B cell (primary cell): ENCODE measurements at regions of chr12 and their contacts with region 1.

Region 1: DNA sequence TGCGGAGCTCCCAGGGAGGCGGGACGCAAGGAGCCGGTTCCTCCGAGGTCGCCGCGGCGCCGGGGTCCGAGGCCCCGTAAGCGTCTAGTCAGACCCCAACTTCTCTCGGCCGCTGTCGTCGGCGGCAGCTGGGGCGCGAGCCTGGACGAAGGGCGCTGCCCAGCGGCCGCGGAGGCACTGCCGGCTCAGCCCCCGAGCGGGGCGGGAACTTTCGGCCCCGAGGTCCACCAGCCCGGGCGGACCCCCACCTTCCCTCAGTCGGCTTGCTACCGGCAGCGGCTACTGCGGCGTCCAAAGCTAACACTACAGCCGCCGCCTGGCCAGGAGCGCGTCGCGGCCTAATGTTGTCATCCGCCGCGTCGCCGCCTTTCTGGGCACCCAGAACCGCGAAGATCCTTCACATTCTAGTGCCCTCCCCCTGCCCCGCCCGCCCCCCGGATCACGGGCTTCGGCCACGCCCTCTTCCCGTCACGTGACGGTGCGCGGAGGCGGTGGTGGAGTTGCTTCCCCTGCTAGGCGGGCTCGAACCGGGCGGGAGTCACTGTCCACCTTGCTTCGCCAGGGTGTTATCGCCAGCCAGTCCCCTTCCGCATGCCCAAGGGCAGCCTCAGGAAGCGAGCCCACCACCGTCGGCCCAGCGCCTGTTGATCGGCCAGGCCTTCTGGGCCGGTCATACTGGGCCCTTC is at the start of gene OSBPL8:
- DNase-seq: peak; percentile 95
- ATAC-seq: peak; percentile 79
- H3K4me3 ChIP-seq: peak within 1 kb of the TSS; percentile 76 to 99 (median 93)
- H3K4me3 Mint-ChIP-seq: peak within 1 kb of the TSS; percentile 98
- H3K27ac ChIP-seq: peak within 1 kb of the TSS; percentile 93 to 96
- H3K27ac Mint-ChIP-seq: peak within 1 kb of the TSS; percentile 98
- H3K4me1 ChIP-seq: peaks cover 29 to 46% of the 10 kb centered on the region in 2 donors
- H3K4me1 Mint-ChIP-seq: peaks cover 44% of the 10 kb centered on the region
- H3K27me3 ChIP-seq: no peaks in the 10 kb centered on the region
- H3K27me3 Mint-ChIP-seq: no peaks in the 10 kb centered on the region
- CTCF ChIP-seq: no peak
- total RNA-seq, gene OSBPL8: 112 and 116 TPM in 2 replicates

Region 2: GRCh38 chr12:75511116-75512048 is 1048.2 kb before region 1 on chr12 and contains the start of gene KRR1:
- CTCF ChIA-PET with region 1: no interaction called
- POLR2A ChIA-PET with region 1: no interaction called
- intact Hi-C with region 1: loop called (anchors 1 kb)
- DNase-seq: peak; percentile 95
- ATAC-seq: peak; percentile 97
- H3K4me3 ChIP-seq: peak within 1 kb of the TSS; percentile 61 to 100 (median 93)
- H3K4me3 Mint-ChIP-seq: peak within 1 kb of the TSS; percentile 93
- H3K27ac ChIP-seq: peak within 1 kb of the TSS; percentile 72 to 83
- H3K27ac Mint-ChIP-seq: peak within 1 kb of the TSS; percentile 95
- H3K4me1 ChIP-seq: peaks cover 11 to 18% of the 10 kb centered on the region in 2 donors
- H3K4me1 Mint-ChIP-seq: peaks cover 28% of the 10 kb centered on the region
- H3K27me3 ChIP-seq: no peaks in the 10 kb centered on the region
- H3K27me3 Mint-ChIP-seq: no peaks in the 10 kb centered on the region
- CTCF ChIP-seq: no peak
- total RNA-seq, gene KRR1: 80.2 and 87.7 TPM in 2 replicates

Region 3: GRCh38 chr12:76158518-76159321 is 400.8 kb before region 1 on chr12:
- CTCF ChIA-PET with region 1: no interaction called
- POLR2A ChIA-PET with region 1: no interaction called
- intact Hi-C with region 1: loop called (anchors 1 kb)
- DNase-seq: peak; percentile 82
- ATAC-seq: peak; percentile 99
- H3K4me3 ChIP-seq: peak overlapping the region; percentile 5 to 68 (median 45)
- H3K4me3 Mint-ChIP-seq: peak overlapping the region; percentile 91
- H3K27ac ChIP-seq: peak overlapping the region; percentile 14 to 76
- H3K27ac Mint-ChIP-seq: peak overlapping the region; percentile 94
- H3K4me1 ChIP-seq: peaks cover 9 to 16% of the 10 kb centered on the region in 2 donors
- H3K4me1 Mint-ChIP-seq: peaks cover 25% of the 10 kb centered on the region
- H3K27me3 ChIP-seq: no peaks in the 10 kb centered on the region
- H3K27me3 Mint-ChIP-seq: no peaks in the 10 kb centered on the region
- CTCF ChIP-seq: peak; percentile 83

Region 4: GRCh38 chr12:76455582-76456345 is 103.8 kb before region 1 on chr12:
- CTCF ChIA-PET with region 1: interaction called, 5 read pairs
- POLR2A ChIA-PET with region 1: no interaction called
- intact Hi-C with region 1: loop called (anchors 5 kb)
- DNase-seq: peak; percentile 50
- ATAC-seq: peak; percentile 41
- H3K4me3 ChIP-seq: no peak overlapping the region
- H3K4me3 Mint-ChIP-seq: no peak overlapping the region
- H3K27ac ChIP-seq: no peak overlapping the region
- H3K27ac Mint-ChIP-seq: no peak overlapping the region
- H3K4me1 ChIP-seq: peaks cover 0 to 4% of the 10 kb centered on the region in 2 donors
- H3K4me1 Mint-ChIP-seq: peaks cover 13% of the 10 kb centered on the region
- H3K27me3 ChIP-seq: no peaks in the 10 kb centered on the region
- H3K27me3 Mint-ChIP-seq: no peaks in the 10 kb centered on the region
- CTCF ChIP-seq: peak; percentile 70

Region 5: DNA sequence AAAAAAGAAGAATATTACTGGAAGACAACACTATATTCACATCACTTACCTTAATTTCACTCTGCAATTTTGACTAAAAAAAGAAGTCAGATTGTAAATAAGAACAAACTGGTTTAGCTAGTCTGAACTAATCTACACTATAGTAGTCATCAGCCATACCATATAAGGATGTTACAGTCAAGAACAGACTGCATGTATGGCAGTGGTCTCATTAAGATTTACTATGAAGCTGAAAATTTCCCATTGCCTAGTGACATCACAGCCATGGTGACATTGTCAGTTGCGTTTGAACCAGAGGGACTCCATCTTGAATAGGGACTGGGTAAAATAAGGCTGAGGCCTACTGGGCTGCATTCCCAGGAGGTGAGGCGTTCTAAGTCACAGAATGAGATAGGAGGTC is 51.4 kb before region 1 on chr12:
- CTCF ChIA-PET with region 1: interaction called, 8 read pairs
- POLR2A ChIA-PET with region 1: interaction called, 4 read pairs
- intact Hi-C with region 1: loop called (anchors 1 kb)
- DNase-seq: no peak
- ATAC-seq: no peak
- H3K4me3 ChIP-seq: no peak overlapping the region
- H3K4me3 Mint-ChIP-seq: no peak overlapping the region
- H3K27ac ChIP-seq: no peak overlapping the region
- H3K27ac Mint-ChIP-seq: peak overlapping the region; percentile 26
- H3K4me1 ChIP-seq: peaks cover 16 to 29% of the 10 kb centered on the region in 2 donors
- H3K4me1 Mint-ChIP-seq: peaks cover 51% of the 10 kb centered on the region
- H3K27me3 ChIP-seq: no peaks in the 10 kb centered on the region
- H3K27me3 Mint-ChIP-seq: no peaks in the 10 kb centered on the region
- CTCF ChIP-seq: no peak

Region 6: GRCh38 chr12:76586764-76587395 is 27.3 kb after region 1 on chr12:
- CTCF ChIA-PET with region 1: interaction called, 39 read pairs
- POLR2A ChIA-PET with region 1: no interaction called
- intact Hi-C with region 1: no loop called
- DNase-seq: peak; percentile 69
- ATAC-seq: peak; percentile 57
- H3K4me3 ChIP-seq: no peak overlapping the region
- H3K4me3 Mint-ChIP-seq: no peak overlapping the region
- H3K27ac ChIP-seq: no peak overlapping the region
- H3K27ac Mint-ChIP-seq: no peak overlapping the region
- H3K4me1 ChIP-seq: no peaks in the 10 kb centered on the region
- H3K4me1 Mint-ChIP-seq: peaks cover 5% of the 10 kb centered on the region
- H3K27me3 ChIP-seq: no peaks in the 10 kb centered on the region
- H3K27me3 Mint-ChIP-seq: no peaks in the 10 kb centered on the region
- CTCF ChIP-seq: peak; percentile 92

Region 7: GRCh38 chr12:77122236-77122635 is 562.7 kb after region 1 on chr12:
- CTCF ChIA-PET with region 1: no interaction called
- POLR2A ChIA-PET with region 1: no interaction called
- intact Hi-C with region 1: no loop called
- DNase-seq: no peak
- ATAC-seq: no peak
- H3K4me3 ChIP-seq: no peak overlapping the region
- H3K4me3 Mint-ChIP-seq: no peak overlapping the region
- H3K27ac ChIP-seq: no peak overlapping the region
- H3K27ac Mint-ChIP-seq: no peak overlapping the region
- H3K4me1 ChIP-seq: no peaks in the 10 kb centered on the region
- H3K4me1 Mint-ChIP-seq: no peaks in the 10 kb centered on the region
- H3K27me3 ChIP-seq: no peaks in the 10 kb centered on the region
- H3K27me3 Mint-ChIP-seq: peaks cover 10% of the 10 kb centered on the region
- CTCF ChIP-seq: no peak